A673 (cell line): ENCODE measurements at regions of chr13 and their contacts with region 1.

Region 1: GRCh38 chr13:29369060-29369743 is 226.3 kb downstream of the SLC7A1 start:
- DNase-seq: peak; percentile 74
- H3K4me3 ChIP-seq: no peak overlapping the region
- H3K27ac ChIP-seq: no peak overlapping the region
- H3K4me1 ChIP-seq: no peaks in the 10 kb centered on the region
- H3K27me3 ChIP-seq: peaks cover 4% of the 10 kb centered on the region
- CTCF ChIP-seq: peak; percentile 66

Region 2: GRCh38 chr13:28658796-28659620 is 710.2 kb before region 1 on chr13 and contains the start of gene POMP:
- CTCF ChIA-PET with region 1: no interaction called
- POLR2A ChIA-PET with region 1: no interaction called
- intact Hi-C with region 1: no loop called
- DNase-seq: peak; percentile 98
- H3K4me3 ChIP-seq: peak within 1 kb of the TSS; percentile 97
- H3K27ac ChIP-seq: peak within 1 kb of the TSS; percentile 92
- H3K4me1 ChIP-seq: peaks cover 24% of the 10 kb centered on the region
- H3K27me3 ChIP-seq: no peaks in the 10 kb centered on the region
- CTCF ChIP-seq: no peak
- total RNA-seq, gene POMP: 150 and 185 TPM in 2 replicates

Region 3: GRCh38 chr13:28805193-28805819 is 563.9 kb before region 1 on chr13:
- CTCF ChIA-PET with region 1: interaction called, 11 read pairs
- POLR2A ChIA-PET with region 1: no interaction called
- intact Hi-C with region 1: loop called (anchors 5 kb)
- DNase-seq: peak; percentile 44
- H3K4me3 ChIP-seq: no peak overlapping the region
- H3K27ac ChIP-seq: no peak overlapping the region
- H3K4me1 ChIP-seq: no peaks in the 10 kb centered on the region
- H3K27me3 ChIP-seq: peaks cover 7% of the 10 kb centered on the region
- CTCF ChIP-seq: peak; percentile 72

Region 4: GRCh38 chr13:29877456-29878078 is 508.4 kb after region 1 on chr13:
- CTCF ChIA-PET with region 1: no interaction called
- POLR2A ChIA-PET with region 1: no interaction called
- intact Hi-C with region 1: no loop called
- DNase-seq: no peak
- H3K4me3 ChIP-seq: no peak overlapping the region
- H3K27ac ChIP-seq: no peak overlapping the region
- H3K4me1 ChIP-seq: peaks cover 7% of the 10 kb centered on the region
- H3K27me3 ChIP-seq: no peaks in the 10 kb centered on the region
- CTCF ChIP-seq: no peak

Region 5: GRCh38 chr13:30196025-30196424 is 826.8 kb after region 1 on chr13:
- CTCF ChIA-PET with region 1: no interaction called
- POLR2A ChIA-PET with region 1: no interaction called
- intact Hi-C with region 1: no loop called
- DNase-seq: peak; percentile 83
- H3K4me3 ChIP-seq: no peak overlapping the region
- H3K27ac ChIP-seq: peak overlapping the region; percentile 70
- H3K4me1 ChIP-seq: peaks cover 41% of the 10 kb centered on the region
- H3K27me3 ChIP-seq: no peaks in the 10 kb centered on the region
- CTCF ChIP-seq: no peak